PC-9 (cell line): ENCODE measurements at regions of chr19 and their contacts with region 1.

Region 1: DNA sequence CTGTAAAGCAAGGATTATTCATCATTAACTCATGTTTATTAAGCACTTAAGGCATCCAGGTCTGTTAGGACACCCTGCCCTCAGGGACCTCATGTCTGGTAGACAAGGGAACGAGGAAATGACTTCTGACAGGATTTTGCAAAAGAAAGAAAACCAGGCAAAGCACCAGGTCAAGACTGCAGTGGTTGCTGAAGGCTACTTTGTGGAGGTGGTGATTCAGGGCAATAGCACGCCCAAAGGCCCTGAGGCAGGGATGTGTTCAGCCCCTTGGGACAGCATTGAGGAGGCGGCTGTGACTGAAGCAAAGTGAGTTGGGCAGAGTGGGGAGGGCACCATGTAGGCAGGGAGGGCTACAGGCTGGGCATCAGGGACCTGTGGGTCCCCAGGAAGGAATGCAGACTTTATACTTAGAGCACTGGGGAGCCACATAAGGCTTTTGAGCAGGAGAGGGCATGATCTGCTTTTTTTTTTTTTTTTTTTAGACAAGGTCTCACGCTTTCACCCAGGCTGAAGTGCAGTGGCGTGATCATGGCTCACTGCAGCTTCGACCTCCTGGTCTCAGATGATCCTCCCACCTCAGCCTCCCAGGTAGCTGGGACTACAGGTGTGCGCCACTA is 10.8 kb upstream of the HOMER3 start:
- DNase-seq: peak; percentile 70 to 100
- H3K4me3 ChIP-seq: no peak overlapping the region
- H3K27ac ChIP-seq: peak overlapping the region; percentile 75
- H3K4me1 ChIP-seq: peaks cover 31% of the 10 kb centered on the region
- H3K27me3 ChIP-seq: no peaks in the 10 kb centered on the region
- CTCF ChIP-seq: no peak

Region 2: GRCh38 chr19:18865973-18866799 is 85.6 kb before region 1 on chr19:
- CTCF ChIA-PET with region 1: interaction called, 23 read pairs
- POLR2A ChIA-PET with region 1: no interaction called
- intact Hi-C with region 1: no loop called
- DNase-seq: no peak
- H3K4me3 ChIP-seq: no peak overlapping the region
- H3K27ac ChIP-seq: no peak overlapping the region
- H3K4me1 ChIP-seq: 0 out of 2 replicates have a peak, but pooled peaks cover 6% of the 10 kb centered on the region
- H3K27me3 ChIP-seq: no peaks in the 10 kb centered on the region
- CTCF ChIP-seq: peak; percentile 82

Region 3: GRCh38 chr19:18895038-18895823 is 56.5 kb before region 1 on chr19:
- CTCF ChIA-PET with region 1: no interaction called
- POLR2A ChIA-PET with region 1: interaction called, 18 read pairs
- intact Hi-C with region 1: no loop called
- DNase-seq: peak; percentile 68 to 71
- H3K4me3 ChIP-seq: peak overlapping the region; percentile 67
- H3K27ac ChIP-seq: no peak overlapping the region
- H3K4me1 ChIP-seq: no peaks in the 10 kb centered on the region
- H3K27me3 ChIP-seq: no peaks in the 10 kb centered on the region
- CTCF ChIP-seq: peak; percentile 70

Region 4: DNA sequence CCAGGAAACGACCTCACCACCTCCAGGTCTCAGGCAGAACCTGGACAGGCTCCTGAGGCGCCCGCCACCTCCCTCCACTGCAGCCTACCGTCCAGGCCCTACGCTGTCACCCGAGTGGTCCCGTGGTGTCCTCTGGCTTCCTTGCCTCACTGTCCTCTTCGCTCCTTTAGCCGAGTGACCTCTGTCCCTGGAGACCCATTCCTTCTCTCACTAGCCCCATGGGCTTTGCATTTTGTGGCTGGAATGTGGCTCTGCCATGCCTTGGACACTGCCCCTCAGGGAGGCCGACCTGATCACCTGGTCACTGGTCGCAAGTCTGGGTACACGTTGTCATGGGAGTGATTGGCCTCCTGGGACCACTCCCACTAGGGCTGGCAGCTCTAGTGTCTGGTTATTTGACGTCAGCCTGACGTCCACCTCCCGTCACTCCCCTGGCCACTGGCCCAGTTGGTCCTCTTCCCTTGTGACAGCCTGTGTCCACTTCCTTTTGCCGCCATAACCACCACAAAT is 129.9 kb after region 1 on chr19:
- CTCF ChIA-PET with region 1: no interaction called
- POLR2A ChIA-PET with region 1: no interaction called
- intact Hi-C with region 1: no loop called
- DNase-seq: no peak
- H3K4me3 ChIP-seq: no peak overlapping the region
- H3K27ac ChIP-seq: no peak overlapping the region
- H3K4me1 ChIP-seq: no peaks in the 10 kb centered on the region
- H3K27me3 ChIP-seq: no peaks in the 10 kb centered on the region
- CTCF ChIP-seq: no peak

Region 5: GRCh38 chr19:19686580-19686979 is 734.8 kb after region 1 on chr19:
- CTCF ChIA-PET with region 1: no interaction called
- POLR2A ChIA-PET with region 1: no interaction called
- intact Hi-C with region 1: no loop called
- DNase-seq: no peak
- H3K4me3 ChIP-seq: no peak overlapping the region
- H3K27ac ChIP-seq: no peak overlapping the region
- H3K4me1 ChIP-seq: no peaks in the 10 kb centered on the region
- H3K27me3 ChIP-seq: no peaks in the 10 kb centered on the region
- CTCF ChIP-seq: no peak